Endothelial cell of umbilical vein (primary cell): ENCODE measurements at regions of chr14 and their contacts with region 1.

Region 1: GRCh38 chr14:73851644-73852382 is at the start of gene PTGR2:
- DNase-seq: peak; percentile 97
- H3K4me3 ChIP-seq: peak within 1 kb of the TSS; percentile 48 to 79 (median 52)
- H3K27ac ChIP-seq: peak within 1 kb of the TSS; percentile 93
- H3K4me1 ChIP-seq: peaks cover 17% of the 10 kb centered on the region
- H3K27me3 ChIP-seq: no peaks in the 10 kb centered on the region
- CTCF ChIP-seq: no peak
- POLR2A ChIP-seq: peak; percentile 64
- total RNA-seq, gene PTGR2: 3.6 and 5.6 TPM in 2 replicates

Region 2: GRCh38 chr14:73713803-73714655 is 137.8 kb before region 1 on chr14 and contains the start of gene PNMA1:
- CTCF ChIA-PET with region 1: no interaction called
- POLR2A ChIA-PET with region 1: no interaction called
- dilution Hi-C with region 1: no loop called
- intact Hi-C with region 1: no loop called
- DNase-seq: peak; percentile 89
- H3K4me3 ChIP-seq: peak within 1 kb of the TSS; percentile 15 to 81 (median 74)
- H3K27ac ChIP-seq: peak within 1 kb of the TSS; percentile 73
- H3K4me1 ChIP-seq: peaks cover 15% of the 10 kb centered on the region
- H3K27me3 ChIP-seq: no peaks in the 10 kb centered on the region
- CTCF ChIP-seq: no peak
- POLR2A ChIP-seq: peak; percentile 91
- total RNA-seq, gene PNMA1: 82.4 and 82.6 TPM in 2 replicates

Region 3: GRCh38 chr14:73873660-73874059 is 21.8 kb after region 1 on chr14:
- CTCF ChIA-PET with region 1: no interaction called
- POLR2A ChIA-PET with region 1: no interaction called
- dilution Hi-C with region 1: no loop called
- intact Hi-C with region 1: no loop called
- DNase-seq: no peak
- H3K4me3 ChIP-seq: no peak overlapping the region
- H3K27ac ChIP-seq: no peak overlapping the region
- H3K4me1 ChIP-seq: no peaks in the 10 kb centered on the region
- H3K27me3 ChIP-seq: no peaks in the 10 kb centered on the region
- CTCF ChIP-seq: no peak
- POLR2A ChIP-seq: no peak

Region 4: GRCh38 chr14:73886449-73887317 is 34.9 kb after region 1 on chr14 and contains the start of gene ZNF410:
- CTCF ChIA-PET with region 1: interaction called, 4 read pairs
- POLR2A ChIA-PET with region 1: interaction called, 4 read pairs
- dilution Hi-C with region 1: no loop called
- intact Hi-C with region 1: loop called (anchors 1 kb)
- DNase-seq: peak; percentile 93
- H3K4me3 ChIP-seq: peak within 1 kb of the TSS; percentile 60 to 87 (median 73)
- H3K27ac ChIP-seq: peak within 1 kb of the TSS; percentile 90
- H3K4me1 ChIP-seq: peaks cover 18% of the 10 kb centered on the region
- H3K27me3 ChIP-seq: no peaks in the 10 kb centered on the region
- CTCF ChIP-seq: no peak
- POLR2A ChIP-seq: peak; percentile 45
- total RNA-seq, gene ZNF410: 39.2 and 45.0 TPM in 2 replicates